ENCODE measurements at regions of chr5 and their contacts with region 1.

Region 1: GRCh38 chr5:42583322-42583721 is 160.1 kb downstream of the GHR start:
- DNase-seq: peak; percentile 59
- H3K4me3 ChIP-seq: no peak overlapping the region
- H3K27ac ChIP-seq: no peak overlapping the region
- H3K4me1 ChIP-seq: no peaks in the 10 kb centered on the region
- H3K27me3 ChIP-seq: peaks cover 2 to 5% of the 10 kb centered on the region in 2 experiments
- CTCF ChIP-seq: peak; percentile 73 to 75
- POLR2A ChIP-seq: no peak

Region 2: GRCh38 chr5:41856644-41857491 is 726.5 kb before region 1 on chr5:
- CTCF ChIA-PET with region 1: interaction called, 83 read pairs
- POLR2A ChIA-PET with region 1: no interaction called
- dilution Hi-C with region 1: no loop called
- intact Hi-C with region 1: loop called (anchors 1 kb)
- DNase-seq: peak; percentile 77
- H3K4me3 ChIP-seq: no peak overlapping the region
- H3K27ac ChIP-seq: no peak overlapping the region
- H3K4me1 ChIP-seq: no peaks in the 10 kb centered on the region
- H3K27me3 ChIP-seq: no peaks in the 10 kb centered on the region
- CTCF ChIP-seq: peak; percentile 61
- POLR2A ChIP-seq: no peak

Region 3: GRCh38 chr5:42423285-42424165 is 159.8 kb before region 1 on chr5 and contains the start of gene GHR:
- CTCF ChIA-PET with region 1: interaction called, 75 read pairs
- POLR2A ChIA-PET with region 1: no interaction called
- dilution Hi-C with region 1: no loop called
- intact Hi-C with region 1: loop called (anchors 1 kb)
- DNase-seq: peak; percentile 89
- H3K4me3 ChIP-seq: peak within 1 kb of the TSS; percentile 8 to 39 (median 18)
- H3K27ac ChIP-seq: no peak within 1 kb of the TSS
- H3K4me1 ChIP-seq: peaks cover 4% of the 10 kb centered on the region
- H3K27me3 ChIP-seq: peaks cover 12% of the 10 kb centered on the region in 2 experiments
- CTCF ChIP-seq: peak; percentile 60 to 74
- POLR2A ChIP-seq: no peak
- total RNA-seq, gene GHR: 0.27 and 0.39 TPM in 2 replicates

Region 4: GRCh38 chr5:42436051-42436450 is 147.3 kb before region 1 on chr5:
- CTCF ChIA-PET with region 1: no interaction called
- POLR2A ChIA-PET with region 1: no interaction called
- dilution Hi-C with region 1: no loop called
- intact Hi-C with region 1: no loop called
- DNase-seq: no peak
- H3K4me3 ChIP-seq: no peak overlapping the region
- H3K27ac ChIP-seq: no peak overlapping the region
- H3K4me1 ChIP-seq: no peaks in the 10 kb centered on the region
- H3K27me3 ChIP-seq: no peaks in the 10 kb centered on the region
- CTCF ChIP-seq: no peak
- POLR2A ChIP-seq: no peak

Region 5: GRCh38 chr5:42514754-42515153 is 68.6 kb before region 1 on chr5:
- CTCF ChIA-PET with region 1: interaction called, 8 read pairs
- POLR2A ChIA-PET with region 1: no interaction called
- dilution Hi-C with region 1: no loop called
- intact Hi-C with region 1: loop called (anchors 2 kb)
- DNase-seq: no peak
- H3K4me3 ChIP-seq: no peak overlapping the region
- H3K27ac ChIP-seq: no peak overlapping the region
- H3K4me1 ChIP-seq: no peaks in the 10 kb centered on the region
- H3K27me3 ChIP-seq: no peaks in the 10 kb centered on the region
- CTCF ChIP-seq: no peak
- POLR2A ChIP-seq: no peak

Region 6: DNA sequence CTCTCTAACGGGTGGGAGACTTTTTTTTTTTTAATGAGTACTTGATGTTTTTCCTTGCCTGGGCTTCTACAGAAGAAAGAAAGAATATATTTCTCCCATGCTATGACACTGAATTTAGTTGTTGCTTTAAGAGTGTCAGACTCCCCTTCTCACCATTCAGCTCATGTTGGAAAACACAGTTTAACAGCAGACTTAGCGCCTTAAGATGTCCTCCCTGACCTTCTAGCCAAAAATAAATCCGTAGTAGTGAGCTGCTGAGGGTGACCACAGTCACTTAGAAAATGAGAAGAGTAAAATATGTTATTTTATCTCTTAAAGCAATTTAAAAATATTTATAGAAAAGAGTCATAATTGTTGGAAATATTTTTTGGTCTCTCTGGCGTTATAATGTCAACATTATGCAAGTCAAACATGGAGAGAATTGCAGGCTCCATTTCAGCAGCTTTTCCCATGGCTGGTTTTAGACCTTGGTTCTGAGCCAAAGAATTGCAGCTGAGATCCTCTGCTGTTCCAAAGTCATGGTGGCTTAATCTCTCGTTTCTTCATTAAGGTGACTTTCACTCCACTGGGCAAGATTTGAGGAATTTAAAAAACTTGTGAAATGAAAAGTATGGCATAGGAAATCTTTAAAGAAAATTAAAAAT is 16.5 kb before region 1 on chr5:
- CTCF ChIA-PET with region 1: interaction called, 47 read pairs
- POLR2A ChIA-PET with region 1: no interaction called
- dilution Hi-C with region 1: no loop called
- intact Hi-C with region 1: no loop called
- DNase-seq: no peak
- H3K4me3 ChIP-seq: no peak overlapping the region
- H3K27ac ChIP-seq: no peak overlapping the region
- H3K4me1 ChIP-seq: no peaks in the 10 kb centered on the region
- H3K27me3 ChIP-seq: peaks cover 0 to 2% of the 10 kb centered on the region in 2 experiments
- CTCF ChIP-seq: no peak
- POLR2A ChIP-seq: no peak

Region 7: DNA sequence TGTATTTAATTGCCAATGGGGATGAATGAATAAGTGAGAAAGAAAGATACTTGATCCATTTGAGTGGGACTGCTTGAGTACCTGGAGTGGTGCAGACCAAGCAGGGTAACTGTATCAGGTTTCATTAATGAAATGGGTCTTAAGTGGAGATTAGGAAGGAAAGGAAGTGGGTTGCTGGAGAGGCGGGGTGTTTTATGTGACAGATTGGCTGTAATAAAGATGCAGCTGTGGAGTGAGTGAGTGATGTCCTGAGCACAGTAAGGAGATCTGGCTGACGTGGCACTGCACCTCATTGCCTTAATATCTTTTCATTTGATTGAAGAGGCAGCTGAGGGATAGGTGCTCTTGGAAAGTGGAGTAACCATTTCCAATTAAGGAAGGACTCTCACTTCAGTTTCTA is 12.3 kb after region 1 on chr5:
- CTCF ChIA-PET with region 1: interaction called, 16 read pairs
- POLR2A ChIA-PET with region 1: no interaction called
- dilution Hi-C with region 1: no loop called
- intact Hi-C with region 1: no loop called
- DNase-seq: no peak
- H3K4me3 ChIP-seq: no peak overlapping the region
- H3K27ac ChIP-seq: no peak overlapping the region
- H3K4me1 ChIP-seq: no peaks in the 10 kb centered on the region
- H3K27me3 ChIP-seq: peaks cover 0 to 3% of the 10 kb centered on the region in 2 experiments
- CTCF ChIP-seq: no peak
- POLR2A ChIP-seq: no peak

Region 8: DNA sequence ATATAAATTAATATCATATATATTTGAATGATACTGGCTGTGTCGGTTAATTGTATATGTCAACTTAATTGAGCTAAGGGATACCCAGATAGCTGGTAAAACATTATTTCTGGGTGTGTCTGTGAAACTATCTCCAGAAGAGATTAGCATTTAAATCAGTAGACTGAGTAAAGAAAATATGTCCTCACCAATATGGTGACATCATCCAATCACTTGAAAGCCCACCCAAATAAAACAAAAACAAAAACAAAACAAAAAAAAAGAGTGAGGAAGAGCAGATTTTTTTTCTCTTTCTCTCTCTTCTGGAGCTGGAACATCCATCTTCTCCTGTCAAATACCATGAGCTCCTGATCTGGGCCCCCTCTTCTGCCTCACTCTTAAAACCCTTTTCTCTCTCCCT is 157.6 kb after region 1 on chr5:
- CTCF ChIA-PET with region 1: no interaction called
- POLR2A ChIA-PET with region 1: no interaction called
- dilution Hi-C with region 1: no loop called
- intact Hi-C with region 1: no loop called
- DNase-seq: no peak
- H3K4me3 ChIP-seq: no peak overlapping the region
- H3K27ac ChIP-seq: no peak overlapping the region
- H3K4me1 ChIP-seq: no peaks in the 10 kb centered on the region
- H3K27me3 ChIP-seq: no peaks in the 10 kb centered on the region
- CTCF ChIP-seq: no peak
- POLR2A ChIP-seq: no peak

Region 9: DNA sequence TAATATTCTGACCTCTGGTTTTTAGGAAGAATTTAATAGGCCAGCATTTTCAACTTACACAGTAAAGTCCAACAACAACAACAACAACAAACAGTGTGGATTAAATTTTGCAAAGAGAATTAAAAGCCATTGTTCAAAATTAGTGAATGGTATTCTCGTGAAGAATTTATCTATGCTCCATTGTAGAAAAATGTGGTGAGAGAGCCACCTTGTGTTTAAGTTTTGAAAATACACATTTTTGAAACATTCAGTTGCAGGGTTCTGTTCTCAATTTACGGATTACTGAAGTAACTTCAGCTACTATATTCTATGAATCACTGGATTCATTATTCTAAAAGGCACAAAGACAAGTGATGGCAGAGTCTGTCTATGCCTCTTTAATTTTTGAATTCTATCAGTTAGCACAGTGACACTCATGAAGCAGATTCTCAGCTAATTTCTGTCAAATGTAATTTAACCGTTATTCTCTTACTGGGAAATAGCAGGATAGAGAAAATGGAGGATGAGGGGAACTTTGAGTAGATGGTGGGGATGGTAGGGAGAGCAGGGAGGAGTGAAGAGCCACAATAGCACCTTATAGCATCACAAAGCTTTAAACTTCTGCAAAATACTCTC is 184.3 kb after region 1 on chr5:
- CTCF ChIA-PET with region 1: interaction called, 26 read pairs
- POLR2A ChIA-PET with region 1: no interaction called
- dilution Hi-C with region 1: no loop called
- intact Hi-C with region 1: loop called (anchors 1 kb)
- DNase-seq: peak; percentile 39
- H3K4me3 ChIP-seq: no peak overlapping the region
- H3K27ac ChIP-seq: no peak overlapping the region
- H3K4me1 ChIP-seq: no peaks in the 10 kb centered on the region
- H3K27me3 ChIP-seq: no peaks in the 10 kb centered on the region
- CTCF ChIP-seq: peak; percentile 19 to 20
- POLR2A ChIP-seq: no peak

Region 10: DNA sequence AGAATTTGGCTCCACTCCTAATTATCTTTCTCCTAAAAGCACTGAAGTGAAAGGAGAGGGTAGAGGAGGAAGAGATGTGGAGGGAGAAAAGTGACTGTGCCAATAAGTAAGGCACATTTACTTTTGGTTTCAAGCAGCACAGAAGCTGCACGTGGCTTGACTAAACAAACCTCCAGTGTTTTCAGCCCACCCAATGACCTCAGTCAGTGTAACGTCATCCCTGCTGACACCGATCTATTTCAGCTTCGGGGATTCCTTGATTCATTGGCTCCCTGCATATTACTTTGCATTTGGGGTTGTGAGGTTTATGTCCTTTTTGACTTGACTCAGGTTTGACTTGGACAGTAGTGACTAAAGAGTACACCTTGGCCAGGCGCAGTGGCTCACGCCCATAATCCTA is 573.1 kb after region 1 on chr5:
- CTCF ChIA-PET with region 1: no interaction called
- POLR2A ChIA-PET with region 1: no interaction called
- dilution Hi-C with region 1: no loop called
- intact Hi-C with region 1: no loop called
- DNase-seq: no peak
- H3K4me3 ChIP-seq: no peak overlapping the region
- H3K27ac ChIP-seq: no peak overlapping the region
- H3K4me1 ChIP-seq: no peaks in the 10 kb centered on the region
- H3K27me3 ChIP-seq: no peaks in the 10 kb centered on the region
- CTCF ChIP-seq: no peak
- POLR2A ChIP-seq: no peak

Measured in endothelial cell of umbilical vein (primary cell).